ENCODE measurements at regions of chr20 and their contacts with region 1.

Region 1: DNA sequence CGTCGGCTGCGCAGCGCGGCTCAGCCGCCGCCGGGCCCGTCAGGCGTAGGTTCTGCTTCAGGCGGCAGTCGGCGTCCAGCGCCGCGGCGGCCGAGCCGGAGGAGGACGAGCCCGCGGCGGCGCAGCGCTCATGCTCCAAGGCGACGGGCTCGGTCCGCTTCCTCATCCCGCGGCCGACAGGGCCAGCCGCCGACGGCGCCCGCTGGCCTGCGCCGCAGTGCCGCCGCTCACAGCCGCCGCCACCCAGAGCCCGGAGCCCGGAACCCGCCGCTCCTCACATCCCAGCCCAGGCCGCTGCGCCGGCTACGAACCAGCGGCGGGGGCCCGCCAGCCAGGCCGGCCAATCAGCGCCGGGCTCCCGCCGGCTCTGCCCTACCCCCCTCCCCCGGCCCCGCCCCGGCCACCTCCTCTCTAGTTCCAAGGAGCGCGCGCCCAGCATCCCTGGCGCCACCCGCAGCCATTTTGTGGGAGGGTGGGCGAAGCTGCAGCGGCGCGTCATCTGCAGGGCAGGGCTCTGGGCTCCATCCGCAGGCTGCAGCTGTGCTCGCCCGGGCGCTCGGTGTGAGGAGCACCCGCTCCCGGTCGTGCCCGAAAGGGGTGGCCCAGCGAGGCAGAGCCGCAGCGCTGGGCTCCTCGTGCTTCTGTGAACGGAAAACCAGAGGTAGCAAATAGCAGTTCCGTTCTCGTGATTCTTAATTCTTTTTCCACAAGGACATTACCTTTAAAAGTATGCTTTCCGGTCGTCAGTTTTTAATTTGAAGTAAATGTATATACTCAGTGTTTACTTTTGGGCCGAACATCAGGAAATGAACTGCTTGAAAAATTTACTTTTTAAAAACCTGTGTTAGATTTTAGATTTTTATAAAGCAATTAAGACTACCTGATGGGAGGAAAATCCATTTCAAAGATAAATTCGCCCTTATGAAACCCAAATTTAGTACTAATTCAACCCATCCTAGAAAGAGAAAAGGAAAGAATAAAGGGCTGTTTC is at the start of gene ABHD12:
- DNase-seq: peak; percentile 98
- total RNA-seq, gene ABHD12: 35.8 TPM

Region 2: DNA sequence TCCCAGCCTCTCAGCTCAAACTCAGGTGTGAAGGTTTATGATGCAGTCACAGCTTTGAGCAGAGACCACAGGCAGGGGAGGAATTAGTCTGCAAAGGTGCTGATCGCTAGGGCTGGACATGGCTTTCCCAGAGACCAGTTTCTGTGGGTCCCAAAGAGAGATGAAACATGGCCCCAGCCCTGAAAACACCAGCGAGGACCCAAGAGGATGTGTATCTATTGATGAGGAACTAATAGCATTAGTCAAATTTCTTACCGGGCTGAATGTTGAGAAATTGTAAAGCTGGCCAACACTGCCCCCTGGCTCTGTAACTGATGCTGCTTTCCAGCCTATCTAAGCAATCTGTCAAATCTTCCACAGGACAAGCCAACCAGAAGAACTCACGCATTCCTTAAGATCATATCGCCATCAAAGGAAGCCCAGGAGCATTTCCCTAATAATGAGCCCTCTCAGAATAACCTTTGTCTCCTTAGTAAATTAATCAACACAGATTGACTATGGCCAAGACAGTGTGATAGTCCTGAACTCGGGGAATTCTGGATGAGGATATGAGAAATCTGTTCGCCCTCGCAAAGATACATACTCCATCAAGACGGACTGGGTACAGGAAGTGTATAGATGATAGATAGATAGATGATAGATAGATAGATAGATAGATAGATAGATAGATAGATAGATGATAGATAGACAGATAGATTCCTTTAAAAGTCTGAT is 325.1 kb before region 1 on chr20:
- intact Hi-C with region 1: loop called (anchors 10 kb)
- DNase-seq: peak; percentile 77

Region 3: DNA sequence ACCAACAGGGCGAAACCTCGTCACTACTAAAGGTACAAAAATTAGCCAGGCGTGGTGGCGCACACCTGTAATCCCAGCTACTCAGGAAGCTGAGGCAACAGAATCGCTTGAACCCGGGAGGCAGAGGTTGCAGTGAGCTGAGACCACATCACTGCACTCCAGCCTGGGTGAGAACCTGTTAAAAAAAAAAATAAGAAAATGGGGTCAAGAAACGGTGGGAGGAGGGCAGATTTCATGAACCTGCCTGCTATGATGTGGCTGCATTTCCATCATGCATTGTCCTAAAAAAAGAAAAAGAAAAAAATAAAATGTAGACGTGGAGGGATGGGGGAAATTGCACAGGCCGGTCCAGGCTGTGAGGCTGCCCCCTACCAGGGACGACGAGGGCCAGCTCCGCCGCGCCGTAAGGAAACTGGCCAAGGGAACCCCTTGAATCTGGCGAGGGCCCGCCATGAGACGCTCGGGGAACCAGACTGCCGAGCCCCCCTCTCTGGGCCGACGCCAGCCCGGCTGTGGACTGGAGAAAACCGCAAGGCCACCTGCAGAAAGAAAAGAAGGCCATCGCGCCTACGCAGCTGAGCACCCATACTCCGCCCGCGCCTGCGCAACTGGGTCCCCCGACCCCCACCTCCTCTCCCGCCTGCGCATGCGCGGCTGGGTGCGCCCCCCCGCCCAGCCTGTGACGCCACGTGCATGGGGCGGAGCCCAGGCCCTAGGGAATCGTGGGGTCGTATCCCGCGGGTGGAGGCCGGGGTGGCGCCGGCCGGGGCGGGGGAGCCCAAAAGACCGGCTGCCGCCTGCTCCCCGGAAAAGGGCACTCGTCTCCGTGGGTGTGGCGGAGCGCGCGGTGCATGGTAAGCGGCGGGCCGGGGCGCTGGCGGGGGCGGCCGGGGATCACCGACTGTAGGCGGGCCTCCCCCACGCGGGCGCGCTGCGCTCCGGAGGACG is 195.5 kb before region 1 on chr20 and contains the start of gene ENTPD6:
- intact Hi-C with region 1: loop called (anchors 5 kb)
- DNase-seq: peak; percentile 95
- total RNA-seq, gene ENTPD6: 102 TPM

Region 4: GRCh38 chr20:25247956-25248785 is 142.7 kb before region 1 on chr20 and contains the start of gene PYGB:
- intact Hi-C with region 1: loop called (anchors 10 kb)
- DNase-seq: peak; percentile 91
- total RNA-seq, gene PYGB: 386 TPM

Region 5: DNA sequence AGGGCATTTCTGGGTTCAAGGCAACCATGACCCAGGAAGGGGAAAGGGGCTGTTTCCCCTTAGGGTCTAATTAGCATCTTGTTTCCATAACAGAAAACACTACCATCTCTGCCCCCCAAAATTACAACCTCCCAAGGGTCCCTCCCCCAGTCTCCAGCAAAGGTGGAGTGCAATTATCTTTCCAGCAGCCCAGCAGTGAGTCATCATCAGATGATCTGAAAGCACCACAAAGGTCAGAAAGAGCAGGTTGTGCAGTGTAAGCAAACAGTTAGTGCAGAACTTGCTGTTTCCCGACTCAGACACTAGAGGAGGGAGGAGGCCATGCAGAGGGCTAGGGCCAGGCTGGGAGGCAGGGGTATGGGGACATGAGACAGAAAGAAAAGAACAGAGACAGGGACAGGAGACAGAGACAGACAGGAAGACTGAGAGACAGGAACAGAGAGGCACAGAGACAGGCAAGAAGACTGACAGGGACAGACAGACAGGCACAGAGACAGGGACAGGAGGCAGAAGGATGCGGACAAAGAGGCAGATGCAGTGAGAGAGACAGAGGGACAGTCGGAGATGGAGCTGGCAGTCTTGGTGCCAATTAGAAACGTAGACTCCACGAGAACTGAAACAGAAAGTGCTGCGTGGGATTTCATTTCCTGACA is 80.4 kb before region 1 on chr20:
- intact Hi-C with region 1: loop called (anchors 2 kb)
- DNase-seq: no peak

Region 6: DNA sequence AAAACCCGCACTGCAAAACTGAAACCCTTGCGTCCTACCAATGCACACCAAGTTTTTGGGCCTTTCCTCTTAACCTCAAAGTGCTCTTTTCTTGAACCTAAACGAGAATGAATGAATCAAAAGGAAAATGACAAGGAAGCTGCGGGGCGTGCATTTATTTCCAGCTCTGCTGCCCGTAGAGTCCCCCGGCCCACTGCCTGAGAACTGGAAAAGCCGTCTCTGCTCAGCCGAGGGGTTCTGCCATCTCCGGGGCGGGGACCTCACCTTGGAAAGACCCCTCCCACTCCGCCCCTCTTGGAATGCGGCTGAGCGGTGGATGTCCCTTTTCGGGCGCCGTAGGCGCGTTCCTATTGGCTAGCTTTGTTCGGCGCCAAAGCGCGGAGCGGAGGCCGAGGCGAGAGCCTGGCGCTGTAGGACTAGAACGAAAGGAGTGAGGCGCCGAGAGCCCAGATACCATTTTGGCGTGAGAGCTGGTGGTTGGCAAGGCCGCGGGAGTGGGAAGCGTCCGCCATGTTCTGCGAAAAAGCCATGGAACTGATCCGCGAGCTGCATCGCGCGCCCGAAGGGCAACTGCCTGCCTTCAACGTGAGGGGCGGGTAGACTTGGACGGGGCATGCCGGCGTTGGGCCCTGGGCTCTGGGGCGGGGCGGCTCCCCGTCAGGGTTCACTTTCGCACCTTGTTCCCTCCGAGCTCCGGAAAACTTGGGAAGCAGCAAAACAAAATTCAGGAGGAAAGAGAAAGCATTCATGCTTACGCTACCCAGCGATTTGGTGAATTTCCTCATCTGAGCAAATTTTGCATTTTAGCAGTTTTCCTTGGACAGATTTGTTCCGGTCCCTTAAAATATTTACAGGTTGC is 16.7 kb after region 1 on chr20 and contains the start of gene GINS1:
- intact Hi-C with region 1: loop called (anchors 1 kb)
- DNase-seq: peak; percentile 90
- total RNA-seq, gene GINS1: 0.43 TPM